ENCODE measurements at regions of chr12 and their contacts with region 1.

Region 1: GRCh38 chr12:94553875-94554274 is 94.2 kb upstream of the CEP83 start:
- DNase-seq: no peak
- ATAC-seq: no peak
- H3K4me3 ChIP-seq: no peak overlapping the region
- H3K4me3 Mint-ChIP-seq: no peak overlapping the region
- H3K27ac ChIP-seq: no peak overlapping the region
- H3K27ac Mint-ChIP-seq: no peak overlapping the region
- H3K4me1 ChIP-seq: no peaks in the 10 kb centered on the region
- H3K4me1 Mint-ChIP-seq: no peaks in the 10 kb centered on the region
- H3K27me3 ChIP-seq: no peaks in the 10 kb centered on the region
- H3K27me3 Mint-ChIP-seq: peaks cover 4 to 7% of the 10 kb centered on the region in 2 donors

Region 2: GRCh38 chr12:95083938-95084337 is 530.1 kb after region 1 on chr12:
- CTCF ChIA-PET with region 1: no interaction called
- POLR2A ChIA-PET with region 1: interaction called in 1 of 2 experiments, 13 read pairs
- DNase-seq: no peak
- ATAC-seq: no peak
- H3K4me3 ChIP-seq: no peak overlapping the region
- H3K4me3 Mint-ChIP-seq: no peak overlapping the region
- H3K27ac ChIP-seq: no peak overlapping the region
- H3K27ac Mint-ChIP-seq: no peak overlapping the region
- H3K4me1 ChIP-seq: no peaks in the 10 kb centered on the region
- H3K4me1 Mint-ChIP-seq: no peaks in the 10 kb centered on the region
- H3K27me3 ChIP-seq: no peaks in the 10 kb centered on the region
- H3K27me3 Mint-ChIP-seq: no peaks in the 10 kb centered on the region

Measured in T-cell (primary cell).